ENCODE measurements at regions of chr7 and their contacts with region 1.

Region 1: DNA sequence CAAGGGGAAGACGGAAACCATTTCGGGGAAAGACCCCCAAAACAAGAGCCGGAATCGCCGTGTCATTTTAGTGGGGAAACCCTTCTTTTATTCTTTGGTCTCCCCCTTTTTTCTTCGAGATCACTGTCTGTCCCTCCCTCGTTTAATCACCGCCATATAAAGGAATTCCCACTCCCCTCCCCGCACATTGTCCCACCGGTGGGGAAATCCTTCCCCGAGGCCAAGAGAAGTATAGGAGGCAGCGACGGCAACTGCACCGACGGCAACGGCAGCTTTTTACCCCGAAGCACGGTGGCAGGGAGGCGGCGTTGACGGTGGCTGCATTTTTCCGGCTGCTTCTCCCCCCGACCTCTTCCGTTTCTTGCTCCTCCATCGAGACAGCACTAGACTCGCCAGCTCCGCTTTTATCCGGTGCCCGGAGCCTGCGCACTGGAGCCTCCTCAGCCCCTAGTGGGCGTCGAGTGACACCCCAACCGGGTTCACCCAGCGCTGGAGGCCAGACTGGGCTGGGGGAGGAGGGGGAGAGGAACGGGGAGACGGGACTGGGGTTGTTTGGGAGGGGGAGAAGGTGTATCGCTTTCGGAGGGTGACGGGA is 687 bp upstream of the KMT2E start:
- DNase-seq: peak; percentile 92
- H3K4me3 ChIP-seq: peak overlapping the region; percentile 90 to 99 (median 99)
- H3K27ac ChIP-seq: peak overlapping the region; percentile 100
- H3K4me1 ChIP-seq: peaks cover 16% of the 10 kb centered on the region
- H3K27me3 ChIP-seq: no peaks in the 10 kb centered on the region
- CTCF ChIP-seq: peak; percentile 34 to 60

Region 2: GRCh38 chr7:104943502-104944343 is 69.6 kb before region 1 on chr7:
- CTCF ChIA-PET with region 1: no interaction called
- dilution Hi-C with region 1: loop called (anchors 5 kb)
- in situ Hi-C with region 1: no loop called
- intact Hi-C with region 1: loop called (anchors 1 kb)
- DNase-seq: peak; percentile 68
- H3K4me3 ChIP-seq: no peak overlapping the region
- H3K27ac ChIP-seq: peak overlapping the region; percentile 98
- H3K4me1 ChIP-seq: peaks cover 33% of the 10 kb centered on the region
- H3K27me3 ChIP-seq: no peaks in the 10 kb centered on the region
- CTCF ChIP-seq: no peak

Region 3: DNA sequence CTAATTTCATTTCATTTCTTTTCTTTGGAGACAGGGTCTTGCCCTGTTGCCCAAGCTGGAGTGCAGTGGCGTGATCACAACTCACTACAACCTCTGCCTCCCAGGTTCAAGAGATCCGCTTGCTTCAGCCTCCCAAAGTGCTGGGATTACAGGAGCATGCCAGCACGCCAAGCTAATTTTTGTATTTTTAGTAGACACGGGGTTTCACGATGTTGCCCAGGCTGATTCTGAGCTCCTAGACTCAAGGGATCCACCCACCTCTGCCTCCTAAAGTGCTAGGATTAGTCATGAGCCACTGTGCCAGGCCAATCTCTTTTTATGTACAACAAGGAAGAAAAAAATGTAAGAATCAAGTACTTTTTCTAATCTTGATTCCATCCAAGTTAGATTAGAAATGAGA is 10.0 kb before region 1 on chr7:
- CTCF ChIA-PET with region 1: no interaction called
- dilution Hi-C with region 1: no loop called
- in situ Hi-C with region 1: no loop called
- intact Hi-C with region 1: loop called (anchors 1 kb)
- DNase-seq: peak; percentile 76
- H3K4me3 ChIP-seq: peak overlapping the region; percentile 4 to 28 (median 9)
- H3K27ac ChIP-seq: peak overlapping the region; percentile 55
- H3K4me1 ChIP-seq: peaks cover 37% of the 10 kb centered on the region
- H3K27me3 ChIP-seq: no peaks in the 10 kb centered on the region
- CTCF ChIP-seq: no peak

Region 4: GRCh38 chr7:105036217-105037168 is 23.2 kb after region 1 on chr7:
- CTCF ChIA-PET with region 1: no interaction called
- dilution Hi-C with region 1: no loop called
- in situ Hi-C with region 1: no loop called
- intact Hi-C with region 1: loop called (anchors 1 kb)
- DNase-seq: no peak
- H3K4me3 ChIP-seq: no peak overlapping the region
- H3K27ac ChIP-seq: no peak overlapping the region
- H3K4me1 ChIP-seq: no peaks in the 10 kb centered on the region
- H3K27me3 ChIP-seq: no peaks in the 10 kb centered on the region
- CTCF ChIP-seq: no peak

Region 5: DNA sequence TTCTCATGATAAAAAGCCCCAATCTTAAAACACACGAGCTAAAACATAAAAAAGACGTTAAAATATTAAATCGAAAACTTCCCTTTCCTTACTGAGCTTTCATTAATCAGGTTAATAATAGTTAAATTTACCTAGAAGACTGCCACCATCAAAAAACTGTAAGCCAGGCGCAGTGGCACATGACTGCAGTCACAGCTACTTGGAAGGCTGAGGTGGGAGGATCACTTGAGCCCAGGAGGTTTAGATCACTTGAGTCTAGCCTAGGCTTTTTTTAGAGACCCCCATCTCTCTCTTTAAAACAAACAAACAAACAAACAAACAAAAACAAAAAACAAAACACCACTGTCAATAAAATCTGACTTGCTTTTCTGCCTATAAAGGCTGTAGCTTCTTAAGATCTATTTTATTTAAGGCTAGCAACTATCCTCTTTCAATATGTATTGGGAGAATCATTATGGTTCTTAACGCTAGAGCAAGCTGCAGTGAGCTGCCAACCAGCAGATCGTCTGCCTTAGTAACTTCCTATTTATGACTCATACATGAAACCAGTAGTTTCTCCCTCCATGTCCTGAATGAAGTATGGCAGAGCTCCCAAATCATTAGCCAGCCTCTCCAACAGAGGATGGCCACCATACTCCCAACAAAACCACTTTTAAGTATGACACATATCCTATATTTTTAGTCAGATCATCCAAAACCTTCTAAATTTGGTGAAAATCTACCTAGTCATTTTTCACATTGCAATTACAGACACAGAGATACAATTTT is 211.8 kb after region 1 on chr7:
- CTCF ChIA-PET with region 1: no interaction called
- dilution Hi-C with region 1: no loop called
- in situ Hi-C with region 1: no loop called
- intact Hi-C with region 1: loop called (anchors 5 kb)
- DNase-seq: peak; percentile 91
- H3K4me3 ChIP-seq: peak overlapping the region in 1 of 3 experiments; percentile 20
- H3K27ac ChIP-seq: peak overlapping the region; percentile 97
- H3K4me1 ChIP-seq: peaks cover 40% of the 10 kb centered on the region
- H3K27me3 ChIP-seq: no peaks in the 10 kb centered on the region
- CTCF ChIP-seq: no peak

Measured in mammary epithelial cell (primary cell).